Gastrocnemius medialis (tissue), 4 donors: ENCODE measurements at regions of chr4 and their contacts with region 1.

Region 1: GRCh38 chr4:123671633-123672404 is 275.2 kb downstream of the SPRY1 start:
- DNase-seq: no peak
- ATAC-seq: no peak
- H3K4me3 ChIP-seq: peak overlapping the region in 1 of 4 donors; percentile 6
- H3K27ac ChIP-seq: peak overlapping the region in 2 of 4 donors; percentile 15 to 70
- H3K4me1 ChIP-seq: peaks cover 12 to 22% of the 10 kb centered on the region in 2 donors
- H3K27me3 ChIP-seq: no peaks in the 10 kb centered on the region
- CTCF ChIP-seq: no peak
- POLR2A ChIP-seq: no peak

Region 2: DNA sequence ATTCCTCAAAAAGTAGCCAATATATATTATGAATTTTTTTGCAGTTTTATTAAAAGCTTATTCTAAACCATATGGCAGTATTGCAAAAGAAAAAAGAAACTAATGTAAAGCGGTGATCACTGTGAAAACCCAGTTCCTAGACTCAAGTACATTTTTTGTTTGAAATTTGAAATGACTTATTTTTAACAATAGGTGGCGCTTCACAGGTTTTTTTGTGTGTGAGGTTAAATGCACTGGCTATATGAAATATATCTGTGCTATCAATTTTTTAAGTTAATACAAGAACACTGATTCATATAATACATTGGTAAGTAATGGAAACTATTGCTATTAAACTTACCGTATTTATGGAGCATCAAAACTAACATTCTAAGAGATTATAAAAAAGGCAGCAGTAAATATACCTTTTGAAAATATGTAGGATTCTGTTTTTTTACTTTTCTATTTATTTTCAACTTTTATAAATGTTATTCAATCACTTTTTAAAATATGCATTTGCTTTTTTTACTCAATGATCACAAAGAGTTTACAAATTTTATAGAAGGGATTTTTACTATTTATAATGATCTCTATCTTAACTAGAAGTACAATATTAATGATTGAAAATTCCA is 280.9 kb before region 1 on chr4:
- in situ Hi-C with region 1: loop called in 3 of 4 experiments (anchors 5 to 10 kb)
- intact Hi-C with region 1: loop called (anchors 2 kb)
- DNase-seq: no peak
- ATAC-seq: no peak
- H3K4me3 ChIP-seq: no peak overlapping the region
- H3K27ac ChIP-seq: no peak overlapping the region
- H3K4me1 ChIP-seq: peaks cover 0 to 20% of the 10 kb centered on the region in 2 donors
- H3K27me3 ChIP-seq: no peaks in the 10 kb centered on the region
- CTCF ChIP-seq: peak in 3 of 5 experiments; percentile 41 to 49 (median 47)
- POLR2A ChIP-seq: no peak

Region 3: GRCh38 chr4:123785538-123785937 is 113.7 kb after region 1 on chr4:
- in situ Hi-C with region 1: no loop called
- intact Hi-C with region 1: loop called (anchors 1 kb)
- DNase-seq: peak; percentile 64 to 81
- ATAC-seq: peak; percentile 79 to 92
- H3K4me3 ChIP-seq: no peak overlapping the region
- H3K27ac ChIP-seq: peak overlapping the region; percentile 68 to 79 (median 72)
- H3K4me1 ChIP-seq: peaks cover 18 to 31% of the 10 kb centered on the region in 2 donors
- H3K27me3 ChIP-seq: no peaks in the 10 kb centered on the region
- CTCF ChIP-seq: no peak
- POLR2A ChIP-seq: no peak

Region 4: GRCh38 chr4:123826896-123827295 is 155.1 kb after region 1 on chr4:
- in situ Hi-C with region 1: no loop called
- intact Hi-C with region 1: loop called (anchors 5 kb)
- DNase-seq: peak; percentile 15 to 60
- ATAC-seq: peak in 1 of 2 donors; percentile 60
- H3K4me3 ChIP-seq: no peak overlapping the region
- H3K27ac ChIP-seq: peak overlapping the region in 2 of 4 donors; percentile 9 to 58
- H3K4me1 ChIP-seq: peaks cover 19 to 23% of the 10 kb centered on the region in 2 donors
- H3K27me3 ChIP-seq: no peaks in the 10 kb centered on the region
- CTCF ChIP-seq: no peak
- POLR2A ChIP-seq: no peak

Region 5: DNA sequence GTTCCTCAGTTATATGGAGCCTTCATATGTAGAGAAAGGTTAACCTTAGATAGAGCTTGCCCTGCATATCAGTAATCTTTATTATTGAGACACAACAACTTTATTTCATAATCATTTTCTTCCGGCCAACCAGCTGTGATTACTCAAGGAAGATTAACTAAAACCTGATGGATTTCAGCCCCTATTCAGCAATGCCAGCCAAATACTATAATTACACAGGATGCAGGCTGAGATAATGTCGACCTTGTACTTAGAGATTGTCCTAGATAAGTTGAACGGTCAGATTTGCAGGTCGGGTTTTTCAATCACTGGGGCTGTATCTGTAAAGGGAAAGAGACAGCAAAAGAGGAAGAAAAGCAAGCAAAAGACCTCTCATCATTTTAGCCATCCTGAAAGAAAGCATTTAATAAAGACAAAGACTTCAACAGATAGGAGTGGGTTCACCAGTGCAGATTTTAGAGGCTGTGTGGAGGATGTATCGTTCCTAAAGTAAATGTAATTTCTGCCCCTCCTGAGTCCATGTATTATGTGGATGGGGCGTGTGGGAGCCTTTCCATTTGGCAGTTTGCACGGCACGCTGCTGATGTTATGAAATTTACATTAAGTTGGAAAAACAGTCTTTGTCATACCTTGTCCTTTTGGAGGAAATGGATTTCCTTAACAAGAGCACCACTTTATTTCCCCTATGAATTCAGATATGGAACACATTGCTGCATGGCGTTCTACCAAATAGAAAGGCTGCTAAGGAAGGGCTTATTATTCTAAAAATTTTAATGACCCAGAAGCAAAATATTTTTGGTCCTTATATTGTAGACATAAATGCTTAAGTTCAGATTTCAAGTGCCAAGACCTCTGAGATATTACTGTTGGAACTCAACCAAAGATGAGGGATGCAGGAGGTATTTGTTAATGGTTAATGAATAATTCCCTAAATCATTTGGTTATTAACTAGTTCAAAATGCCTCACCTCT is 221.5 kb after region 1 on chr4:
- in situ Hi-C with region 1: no loop called
- intact Hi-C with region 1: loop called (anchors 10 kb)
- DNase-seq: peak in 1 of 2 donors; percentile 16
- ATAC-seq: peak; percentile 31 to 61
- H3K4me3 ChIP-seq: peak overlapping the region in 1 of 4 donors; percentile 7
- H3K27ac ChIP-seq: peak overlapping the region; percentile 55 to 73 (median 63)
- H3K4me1 ChIP-seq: peaks cover 49 to 56% of the 10 kb centered on the region in 2 donors
- H3K27me3 ChIP-seq: no peaks in the 10 kb centered on the region
- CTCF ChIP-seq: no peak
- POLR2A ChIP-seq: no peak